ENCODE measurements at regions of chr7 and their contacts with region 1.

Region 1: GRCh38 chr7:98168181-98168905 is 42.9 kb upstream of the BHLHA15 start:
- DNase-seq: peak; percentile 55
- H3K4me3 Mint-ChIP-seq: no peak overlapping the region
- H3K27ac Mint-ChIP-seq: no peak overlapping the region
- H3K4me1 Mint-ChIP-seq: peaks cover 8% of the 10 kb centered on the region
- H3K27me3 Mint-ChIP-seq: no peaks in the 10 kb centered on the region

Region 2: GRCh38 chr7:98021588-98022351 is 146.6 kb before region 1 on chr7:
- CTCF ChIA-PET with region 1: interaction called, 55 read pairs
- POLR2A ChIA-PET with region 1: no interaction called
- DNase-seq: peak; percentile 82
- H3K4me3 Mint-ChIP-seq: no peak overlapping the region
- H3K27ac Mint-ChIP-seq: no peak overlapping the region
- H3K4me1 Mint-ChIP-seq: peaks cover 5% of the 10 kb centered on the region
- H3K27me3 Mint-ChIP-seq: no peaks in the 10 kb centered on the region

Region 3: DNA sequence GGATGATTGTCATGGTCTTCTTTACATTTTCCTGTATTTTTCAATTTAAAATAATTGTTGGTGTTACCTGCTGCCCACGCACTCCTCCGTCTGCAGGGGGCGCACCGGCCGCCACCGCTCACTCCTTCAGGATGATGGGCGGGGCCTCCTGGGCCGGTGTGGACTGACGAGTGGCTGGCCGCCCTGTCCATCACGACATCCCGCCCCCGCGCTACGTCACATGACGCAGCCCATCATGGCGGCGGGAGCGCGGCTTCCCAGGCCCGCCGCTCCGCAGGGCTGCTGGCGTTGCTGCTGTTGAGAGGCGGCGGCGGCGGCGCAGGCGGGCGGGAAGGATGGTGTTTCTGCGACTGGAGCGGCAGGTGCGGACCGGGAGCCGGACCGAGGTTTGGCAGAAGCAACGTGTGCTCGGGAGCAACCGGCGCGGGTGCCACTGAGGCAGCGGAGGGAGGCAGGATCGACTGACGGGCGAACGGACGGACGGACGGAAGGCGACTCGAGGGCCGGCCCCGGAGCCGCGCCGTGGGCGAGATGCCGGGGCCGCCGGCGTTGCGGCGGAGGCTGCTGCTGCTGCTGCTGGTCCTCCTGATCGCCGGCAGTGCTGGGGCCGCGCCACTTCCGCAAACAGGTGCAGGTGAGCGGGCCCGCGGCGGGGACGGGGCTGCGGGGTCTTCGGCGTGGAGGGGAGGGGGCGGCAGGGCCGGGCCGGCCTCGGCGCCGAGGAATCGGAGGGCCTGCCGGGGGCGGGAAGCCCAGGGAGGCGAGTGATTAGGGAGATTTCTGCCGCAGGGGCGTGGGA is 61.5 kb before region 1 on chr7 and contains the start of gene LMTK2:
- CTCF ChIA-PET with region 1: interaction called, 10 read pairs
- POLR2A ChIA-PET with region 1: no interaction called
- DNase-seq: peak; percentile 95
- H3K4me3 Mint-ChIP-seq: peak within 1 kb of the TSS; percentile 97
- H3K27ac Mint-ChIP-seq: peak within 1 kb of the TSS; percentile 93
- H3K4me1 Mint-ChIP-seq: peaks cover 20% of the 10 kb centered on the region
- H3K27me3 Mint-ChIP-seq: no peaks in the 10 kb centered on the region
- total RNA-seq, gene LMTK2: 12.8 to 15.5 TPM